A673 (cell line): ENCODE measurements at regions of chr5 and their contacts with region 1.

Region 1: GRCh38 chr5:176543428-176544173 is 5.5 kb upstream of the CDHR2 start:
- DNase-seq: no peak
- H3K4me3 ChIP-seq: peak overlapping the region; percentile 69
- H3K27ac ChIP-seq: no peak overlapping the region
- H3K4me1 ChIP-seq: peaks cover 32% of the 10 kb centered on the region
- H3K27me3 ChIP-seq: no peaks in the 10 kb centered on the region
- CTCF ChIP-seq: no peak

Region 2: GRCh38 chr5:176596689-176597416 is 53.3 kb after region 1 on chr5:
- CTCF ChIA-PET with region 1: no interaction called
- POLR2A ChIA-PET with region 1: interaction called, 20 read pairs
- intact Hi-C with region 1: no loop called
- DNase-seq: no peak
- H3K4me3 ChIP-seq: no peak overlapping the region
- H3K27ac ChIP-seq: no peak overlapping the region
- H3K4me1 ChIP-seq: no peaks in the 10 kb centered on the region
- H3K27me3 ChIP-seq: no peaks in the 10 kb centered on the region
- CTCF ChIP-seq: no peak